HCT116 (cell line): ENCODE measurements at regions of chrX and their contacts with region 1.

Region 1: GRCh38 chrX:51336584-51336983 is 4.0 kb downstream of the NUDT10 start:
- DNase-seq: peak; percentile 13
- ATAC-seq: peak; percentile 74
- H3K4me3 ChIP-seq: no peak overlapping the region
- H3K27ac ChIP-seq: no peak overlapping the region
- H3K4me1 ChIP-seq: no peaks in the 10 kb centered on the region
- H3K27me3 ChIP-seq: peaks cover 3% of the 10 kb centered on the region; the same call in 1 of the 2 replicates
- CTCF ChIP-seq: peak; percentile 24 to 40 (median 39); a peak in 4 of 6 replicates
- POLR2A ChIP-seq: no peak
- RAD21 ChIP-seq: peak; percentile 44

Region 2: DNA sequence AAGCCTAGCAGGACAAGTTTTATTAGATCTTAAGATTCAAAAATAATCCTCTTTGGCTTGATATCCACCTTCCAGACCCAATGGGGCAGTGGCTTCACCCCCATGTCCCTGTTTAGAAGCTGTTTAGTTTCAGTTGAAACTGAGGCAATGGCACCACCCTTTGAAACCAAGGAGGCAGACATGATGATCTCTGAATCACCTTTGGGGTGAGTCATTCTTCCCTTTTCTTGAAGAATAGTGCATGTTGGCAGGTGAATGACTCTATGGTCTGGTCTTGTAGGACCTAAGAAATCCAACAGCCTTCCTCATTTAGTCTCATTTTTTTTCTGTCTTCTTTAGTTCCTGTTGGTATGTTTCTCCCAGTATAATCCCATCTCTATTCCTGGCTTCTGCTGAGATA is 455.6 kb before region 1 on chrX:
- CTCF ChIA-PET with region 1: no interaction called
- POLR2A ChIA-PET with region 1: no interaction called
- RAD21 ChIA-PET with region 1: no interaction called
- intact Hi-C with region 1: no loop called
- DNase-seq: no peak
- ATAC-seq: no peak
- H3K4me3 ChIP-seq: no peak overlapping the region
- H3K27ac ChIP-seq: no peak overlapping the region
- H3K4me1 ChIP-seq: peaks cover 0 to 6% of the 10 kb centered on the region in 2 experiments; a peak in 2 of 4 replicates
- H3K27me3 ChIP-seq: no peaks in the 10 kb centered on the region
- CTCF ChIP-seq: no peak
- POLR2A ChIP-seq: no peak
- RAD21 ChIP-seq: 0 out of 2 replicates have a peak, but pooled peaks have one; percentile 4

Region 3: GRCh38 chrX:51420610-51421009 is 84.0 kb after region 1 on chrX:
- CTCF ChIA-PET with region 1: interaction called, 40 read pairs
- POLR2A ChIA-PET with region 1: no interaction called
- RAD21 ChIA-PET with region 1: interaction called in 1 of 2 experiments, 3 read pairs
- intact Hi-C with region 1: loop called (anchors 2 kb)
- DNase-seq: peak; percentile 23
- ATAC-seq: peak; percentile 55
- H3K4me3 ChIP-seq: no peak overlapping the region
- H3K27ac ChIP-seq: no peak overlapping the region
- H3K4me1 ChIP-seq: no peaks in the 10 kb centered on the region
- H3K27me3 ChIP-seq: no peaks in the 10 kb centered on the region
- CTCF ChIP-seq: peak; percentile 25 to 62 (median 50); a peak in 5 of 6 replicates
- POLR2A ChIP-seq: no peak
- RAD21 ChIP-seq: peak; percentile 25; the same call in 1 of the 2 replicates

Region 4: GRCh38 chrX:51461053-51462044 is 124.8 kb after region 1 on chrX:
- CTCF ChIA-PET with region 1: interaction called, 22 read pairs
- POLR2A ChIA-PET with region 1: no interaction called
- RAD21 ChIA-PET with region 1: no interaction called
- intact Hi-C with region 1: loop called (anchors 1 kb)
- DNase-seq: peak; percentile 7
- ATAC-seq: no peak
- H3K4me3 ChIP-seq: no peak overlapping the region
- H3K27ac ChIP-seq: no peak overlapping the region
- H3K4me1 ChIP-seq: no peaks in the 10 kb centered on the region
- H3K27me3 ChIP-seq: no peaks in the 10 kb centered on the region
- CTCF ChIP-seq: peak in 2 of 3 experiments; percentile 42 to 59; a peak in 4 of 6 replicates
- POLR2A ChIP-seq: no peak
- RAD21 ChIP-seq: peak; percentile 29; the same call in 1 of the 2 replicates

Region 5: DNA sequence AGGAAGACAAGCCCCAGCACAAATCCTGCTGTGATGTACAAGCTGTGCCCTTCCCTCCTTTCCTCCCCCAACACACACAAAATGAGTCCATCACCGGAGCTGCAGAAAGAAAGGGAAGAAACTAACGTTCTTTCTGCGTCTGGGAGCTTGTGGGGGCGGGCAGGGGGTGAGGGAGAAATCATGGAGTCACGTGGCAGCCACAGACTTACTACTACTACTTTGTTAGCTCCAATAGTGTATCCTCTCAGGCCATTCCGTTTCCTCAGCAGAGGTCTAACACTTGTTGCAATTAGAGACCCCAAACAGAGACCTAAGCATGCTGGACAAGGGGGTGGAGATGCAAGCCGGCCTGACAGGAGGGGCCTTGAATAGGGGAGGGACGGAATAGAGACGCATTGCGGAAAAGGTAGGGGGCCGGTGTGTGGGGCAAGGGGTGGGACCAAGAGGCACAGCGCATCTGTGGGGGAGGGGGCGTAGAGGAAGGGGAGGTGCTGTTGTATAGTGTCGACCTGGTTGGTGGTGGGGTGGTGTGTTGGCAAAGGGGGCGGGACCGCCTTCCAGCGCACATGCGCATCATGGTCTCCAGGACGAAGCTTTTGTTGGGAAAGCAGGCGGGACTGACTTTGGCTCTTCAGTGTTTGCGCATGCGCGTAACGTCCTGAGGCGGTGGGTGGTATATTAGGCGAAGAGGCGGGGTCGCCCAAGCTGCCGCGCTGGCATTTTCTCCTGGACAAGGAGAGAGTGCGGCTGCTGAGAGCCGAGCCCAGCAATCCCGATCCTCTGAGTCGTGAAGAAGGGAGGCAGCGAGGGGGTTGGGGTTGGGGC is 556.5 kb after region 1 on chrX and contains the start of gene MAGED1:
- CTCF ChIA-PET with region 1: no interaction called
- POLR2A ChIA-PET with region 1: no interaction called
- RAD21 ChIA-PET with region 1: no interaction called
- intact Hi-C with region 1: no loop called
- DNase-seq: no peak
- ATAC-seq: no peak
- H3K4me3 ChIP-seq: no peak within 1 kb of the TSS
- H3K27ac ChIP-seq: no peak within 1 kb of the TSS
- H3K4me1 ChIP-seq: no peaks in the 10 kb centered on the region
- H3K27me3 ChIP-seq: no peaks in the 10 kb centered on the region
- CTCF ChIP-seq: no peak
- POLR2A ChIP-seq: no peak
- RAD21 ChIP-seq: no peak
- total RNA-seq, gene MAGED1: 82.3 TPM